MCF 10A (cell line): ENCODE measurements at regions of chr18 and their contacts with region 1.

Region 1: GRCh38 chr18:70195852-70196434 is 9.5 kb downstream of the RTTN start:
- DNase-seq: peak; percentile 63
- H3K4me3 Mint-ChIP-seq: no peak overlapping the region
- H3K27ac Mint-ChIP-seq: no peak overlapping the region
- H3K4me1 Mint-ChIP-seq: no peaks in the 10 kb centered on the region
- H3K27me3 Mint-ChIP-seq: no peaks in the 10 kb centered on the region
- CTCF ChIP-seq: peak; percentile 78

Region 2: DNA sequence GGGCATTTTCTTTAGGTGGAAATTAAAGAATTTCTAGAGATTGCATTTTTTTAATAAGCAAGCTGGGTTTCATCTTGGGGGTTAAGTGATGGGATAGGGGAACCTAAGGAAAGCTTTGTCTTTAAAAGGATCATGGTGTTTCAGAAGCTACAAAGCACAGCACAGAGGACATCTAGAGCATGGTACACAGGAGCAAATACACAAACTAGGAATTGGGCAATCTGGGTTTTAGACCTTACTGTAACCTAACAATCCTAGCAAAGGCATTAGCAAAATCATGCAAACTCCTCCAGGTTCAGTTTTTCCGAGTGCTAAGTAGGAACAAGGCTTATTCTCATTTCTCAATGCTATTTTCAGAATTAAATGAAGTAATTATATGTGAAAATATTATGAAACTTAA is 382.4 kb before region 1 on chr18:
- CTCF ChIA-PET with region 1: no interaction called
- POLR2A ChIA-PET with region 1: no interaction called
- intact Hi-C with region 1: no loop called
- DNase-seq: no peak
- H3K4me3 Mint-ChIP-seq: no peak overlapping the region
- H3K27ac Mint-ChIP-seq: no peak overlapping the region
- H3K4me1 Mint-ChIP-seq: no peaks in the 10 kb centered on the region
- H3K27me3 Mint-ChIP-seq: peaks cover 4% of the 10 kb centered on the region
- CTCF ChIP-seq: no peak

Region 3: DNA sequence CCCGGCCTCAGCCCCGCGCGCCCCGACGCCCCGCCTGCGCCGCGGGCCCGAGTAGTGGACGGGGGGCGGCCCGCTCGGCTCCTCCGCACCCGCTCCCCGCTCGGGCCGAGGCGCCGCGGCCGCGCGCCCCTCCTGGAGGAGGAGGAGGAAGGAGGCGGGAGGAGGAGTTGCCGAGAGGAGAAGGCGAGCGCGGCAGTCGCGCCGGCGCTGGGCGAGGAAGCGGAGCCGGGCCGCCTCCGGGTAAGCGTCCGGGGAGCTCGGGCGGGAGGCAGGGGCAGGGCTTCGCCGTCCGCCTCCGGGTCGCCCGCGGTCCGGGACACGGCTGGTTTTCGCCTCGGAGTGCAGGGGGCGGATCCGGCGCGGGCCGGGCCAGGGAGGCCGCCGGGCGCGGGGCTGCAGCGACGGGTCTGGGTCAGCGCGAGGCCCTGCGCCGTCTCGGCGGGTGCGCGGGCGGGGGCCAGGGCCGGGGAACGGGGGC is 92.9 kb after region 1 on chr18 and contains the start of gene SOCS6:
- CTCF ChIA-PET with region 1: interaction called, 9 read pairs
- POLR2A ChIA-PET with region 1: interaction called, 3 read pairs
- intact Hi-C with region 1: loop called (anchors 2 kb)
- DNase-seq: peak; percentile 68
- H3K4me3 Mint-ChIP-seq: peak within 1 kb of the TSS; percentile 81
- H3K27ac Mint-ChIP-seq: peak within 1 kb of the TSS; percentile 83
- H3K4me1 Mint-ChIP-seq: peaks cover 24% of the 10 kb centered on the region
- H3K27me3 Mint-ChIP-seq: no peaks in the 10 kb centered on the region
- CTCF ChIP-seq: no peak
- total RNA-seq, gene SOCS6: 16.9 and 20.4 TPM in 2 replicates

Region 4: GRCh38 chr18:70384181-70384790 is 188.3 kb after region 1 on chr18:
- CTCF ChIA-PET with region 1: no interaction called
- POLR2A ChIA-PET with region 1: no interaction called
- intact Hi-C with region 1: loop called (anchors 5 kb)
- DNase-seq: peak; percentile 90
- H3K4me3 Mint-ChIP-seq: peak overlapping the region; percentile 64
- H3K27ac Mint-ChIP-seq: peak overlapping the region; percentile 89
- H3K4me1 Mint-ChIP-seq: peaks cover 29% of the 10 kb centered on the region
- H3K27me3 Mint-ChIP-seq: no peaks in the 10 kb centered on the region
- CTCF ChIP-seq: no peak

Region 5: DNA sequence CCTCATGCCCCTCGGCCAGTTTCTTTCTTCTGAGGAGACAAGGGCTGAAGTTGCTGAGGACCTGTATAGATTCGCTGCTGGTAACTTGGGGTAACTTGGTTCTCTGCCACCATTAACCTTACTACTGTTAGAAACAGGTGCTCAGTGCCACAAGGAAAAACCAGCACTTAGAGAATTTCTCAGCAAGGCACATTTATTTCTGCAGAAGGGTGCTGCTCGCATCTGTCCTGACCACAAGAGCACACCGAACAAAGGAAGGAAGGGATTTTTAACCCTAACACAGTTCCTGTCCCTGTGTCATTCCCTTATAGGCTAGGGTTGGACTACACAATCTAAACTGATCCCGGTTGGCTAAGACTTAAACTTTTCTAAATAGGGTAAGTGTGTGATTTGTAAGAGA is 247.0 kb after region 1 on chr18:
- CTCF ChIA-PET with region 1: interaction called, 323 read pairs
- POLR2A ChIA-PET with region 1: no interaction called
- intact Hi-C with region 1: no loop called
- DNase-seq: no peak
- H3K4me3 Mint-ChIP-seq: no peak overlapping the region
- H3K27ac Mint-ChIP-seq: no peak overlapping the region
- H3K4me1 Mint-ChIP-seq: no peaks in the 10 kb centered on the region
- H3K27me3 Mint-ChIP-seq: no peaks in the 10 kb centered on the region
- CTCF ChIP-seq: no peak

Region 6: DNA sequence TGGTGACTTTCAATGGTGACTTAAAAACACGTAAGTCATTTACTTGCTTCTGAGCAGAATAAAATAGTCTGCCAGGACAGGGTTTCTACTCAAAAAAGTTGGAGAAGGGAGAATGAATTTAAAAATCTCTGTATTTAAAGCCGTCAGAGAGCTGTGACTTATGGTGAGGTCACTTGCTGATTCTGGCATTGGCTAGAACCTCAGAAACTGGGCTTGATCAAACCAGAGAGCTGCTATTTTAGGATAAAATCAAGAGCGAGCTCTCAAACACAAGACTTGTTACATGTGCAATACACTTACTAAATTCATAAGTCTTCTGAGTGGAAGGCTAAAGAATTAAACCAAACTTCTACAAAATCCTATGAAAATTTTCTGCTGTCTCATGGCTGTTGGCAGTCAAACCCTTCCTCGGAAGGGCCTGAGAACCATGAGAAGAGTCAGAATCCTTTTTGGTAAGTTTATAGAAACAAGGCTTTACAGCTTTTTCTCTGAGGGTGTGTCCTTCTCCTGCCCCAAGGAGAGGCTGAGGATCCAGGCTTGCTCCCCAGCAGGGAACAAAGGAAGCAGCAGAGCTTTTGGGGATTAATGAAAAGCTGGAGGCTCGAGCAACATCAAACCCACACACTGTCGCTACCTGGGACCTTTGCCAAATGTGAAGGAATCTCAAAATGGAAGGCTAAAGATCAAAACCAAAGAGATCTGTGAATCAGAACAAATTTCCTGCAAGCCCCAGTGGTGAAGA is 909.3 kb after region 1 on chr18:
- CTCF ChIA-PET with region 1: no interaction called
- POLR2A ChIA-PET with region 1: no interaction called
- intact Hi-C with region 1: no loop called
- DNase-seq: peak; percentile 6
- H3K4me3 Mint-ChIP-seq: no peak overlapping the region
- H3K27ac Mint-ChIP-seq: no peak overlapping the region
- H3K4me1 Mint-ChIP-seq: peaks cover 9% of the 10 kb centered on the region
- H3K27me3 Mint-ChIP-seq: peaks cover 11% of the 10 kb centered on the region
- CTCF ChIP-seq: no peak